ENCODE measurements at regions of chr2 and their contacts with region 1.

Region 1: DNA sequence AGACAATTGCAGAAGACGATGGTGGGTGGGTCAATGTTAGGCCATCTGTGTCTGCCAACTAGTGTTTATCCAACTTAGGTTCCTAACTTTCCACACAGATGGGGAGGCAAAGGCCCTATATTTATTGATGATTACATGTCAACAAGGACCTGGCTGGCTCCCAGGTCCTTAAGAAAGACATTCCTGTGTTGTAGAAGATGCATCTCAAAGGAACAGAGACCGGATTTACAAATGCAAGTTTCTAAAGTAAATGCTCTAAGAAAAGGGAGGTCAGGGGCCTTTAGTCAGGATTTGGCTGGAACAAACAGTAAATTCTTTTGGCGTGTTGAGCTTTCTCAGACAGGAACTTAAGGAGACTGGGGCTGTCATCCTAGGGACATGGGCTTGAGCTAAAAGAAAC is 175.0 kb downstream of the SH3BP4 start:
- DNase-seq: no peak
- H3K4me3 ChIP-seq: no peak overlapping the region
- H3K27ac ChIP-seq: no peak overlapping the region
- H3K4me1 ChIP-seq: no peaks in the 10 kb centered on the region
- H3K27me3 ChIP-seq: no peaks in the 10 kb centered on the region
- CTCF ChIP-seq: no peak

Region 2: DNA sequence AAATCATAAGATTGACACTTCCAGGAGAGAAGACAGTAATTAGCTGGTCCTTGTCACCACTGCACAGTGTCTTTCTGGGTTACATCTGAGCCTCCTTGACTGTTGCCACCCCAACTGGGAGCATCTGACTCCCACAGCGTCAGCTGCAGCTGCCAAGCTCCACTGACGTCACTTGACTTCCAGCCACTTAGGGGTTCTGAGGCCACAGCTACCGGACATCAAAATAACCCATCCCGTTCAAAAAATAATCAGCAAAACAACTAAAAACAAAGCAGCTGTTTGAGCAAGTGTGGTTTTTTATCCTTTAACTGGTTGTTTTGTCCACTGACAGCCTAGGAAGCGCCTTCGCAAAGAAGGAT is 160.6 kb after region 1 on chr2:
- CTCF ChIA-PET with region 1: no interaction called
- POLR2A ChIA-PET with region 1: no interaction called
- intact Hi-C with region 1: no loop called
- DNase-seq: no peak
- H3K4me3 ChIP-seq: no peak overlapping the region
- H3K27ac ChIP-seq: no peak overlapping the region
- H3K4me1 ChIP-seq: peaks cover 4% of the 10 kb centered on the region; the same call in 1 of the 2 replicates
- H3K27me3 ChIP-seq: no peaks in the 10 kb centered on the region
- CTCF ChIP-seq: no peak

Region 3: DNA sequence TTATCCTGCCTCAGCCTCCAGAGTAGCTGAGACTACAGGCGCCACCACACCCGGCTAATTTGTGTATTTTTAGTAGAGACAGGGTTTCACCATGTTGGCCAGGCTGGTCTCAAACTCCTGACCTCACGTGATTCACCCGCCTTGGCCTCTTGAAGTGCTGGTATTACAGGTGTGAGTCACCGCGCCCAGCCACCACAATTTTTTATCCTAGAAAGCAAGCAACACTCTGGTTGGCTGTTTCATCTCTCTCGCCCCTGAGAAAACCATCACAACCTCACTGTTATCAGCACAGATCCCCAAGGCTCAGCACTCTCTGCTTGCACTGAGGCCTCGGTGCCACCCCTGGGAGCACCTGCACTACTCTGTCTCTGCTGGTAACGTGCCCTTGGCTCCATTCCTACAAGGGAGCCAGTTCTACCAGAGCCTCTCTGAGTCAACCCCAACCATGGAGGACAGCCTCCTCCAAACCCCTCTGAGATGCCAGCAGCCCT is 232.3 kb after region 1 on chr2:
- CTCF ChIA-PET with region 1: no interaction called
- POLR2A ChIA-PET with region 1: no interaction called
- intact Hi-C with region 1: no loop called
- DNase-seq: peak; percentile 91 to 96
- H3K4me3 ChIP-seq: no peak overlapping the region
- H3K27ac ChIP-seq: peak overlapping the region; percentile 23; the same call in 1 of the 2 replicates
- H3K4me1 ChIP-seq: peaks cover 28% of the 10 kb centered on the region
- H3K27me3 ChIP-seq: no peaks in the 10 kb centered on the region
- CTCF ChIP-seq: no peak

Region 4: DNA sequence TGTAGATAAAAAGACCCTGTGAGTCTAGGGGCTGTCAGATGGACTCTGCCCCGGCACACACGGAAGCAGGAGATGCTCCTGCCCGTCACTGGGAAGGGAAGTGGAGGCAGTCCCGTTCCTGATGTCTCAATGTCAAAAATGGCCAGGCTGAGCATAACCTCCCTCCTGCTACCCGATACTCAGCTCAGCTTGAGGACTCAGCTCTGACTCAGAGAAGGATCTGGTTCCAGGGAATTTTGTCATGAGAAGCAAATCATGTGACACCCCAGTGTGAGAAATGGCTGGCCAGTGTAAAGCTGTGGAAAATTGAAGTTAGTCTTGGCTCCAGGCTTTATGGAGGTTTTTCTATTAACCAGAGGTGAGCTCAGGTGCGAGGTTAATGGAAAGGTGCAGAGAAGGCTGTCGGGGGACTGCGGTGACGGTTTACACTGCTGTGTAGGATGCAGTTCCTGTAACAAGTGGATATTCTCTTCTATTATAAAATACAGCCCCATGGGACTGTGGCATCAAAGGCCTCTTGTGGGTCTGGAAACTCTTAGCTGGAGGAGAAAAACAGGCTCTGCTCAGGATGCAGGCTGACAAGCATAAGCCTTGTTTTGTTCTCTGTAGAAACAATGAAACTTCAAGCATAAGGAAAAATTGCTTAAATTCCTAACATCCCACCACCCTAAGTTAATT is 342.3 kb after region 1 on chr2:
- CTCF ChIA-PET with region 1: interaction called, 10 read pairs
- POLR2A ChIA-PET with region 1: no interaction called
- intact Hi-C with region 1: no loop called
- DNase-seq: peak; percentile 63 to 93
- H3K4me3 ChIP-seq: peak overlapping the region; percentile 22; the same call in 1 of the 2 replicates
- H3K27ac ChIP-seq: peak overlapping the region; percentile 87
- H3K4me1 ChIP-seq: peaks cover 29% of the 10 kb centered on the region
- H3K27me3 ChIP-seq: no peaks in the 10 kb centered on the region
- CTCF ChIP-seq: no peak

Region 5: GRCh38 chr2:235614900-235615712 is 488.3 kb after region 1 on chr2:
- CTCF ChIA-PET with region 1: no interaction called
- POLR2A ChIA-PET with region 1: no interaction called
- intact Hi-C with region 1: no loop called
- DNase-seq: peak in 1 of 2 experiments; percentile 46
- H3K4me3 ChIP-seq: no peak overlapping the region
- H3K27ac ChIP-seq: no peak overlapping the region; the same call in 1 of the 2 replicates
- H3K4me1 ChIP-seq: peaks cover 14% of the 10 kb centered on the region
- H3K27me3 ChIP-seq: no peaks in the 10 kb centered on the region
- CTCF ChIP-seq: no peak